HEK293 (cell line): ENCODE measurements at regions of chr3 and their contacts with region 1.

Region 1: DNA sequence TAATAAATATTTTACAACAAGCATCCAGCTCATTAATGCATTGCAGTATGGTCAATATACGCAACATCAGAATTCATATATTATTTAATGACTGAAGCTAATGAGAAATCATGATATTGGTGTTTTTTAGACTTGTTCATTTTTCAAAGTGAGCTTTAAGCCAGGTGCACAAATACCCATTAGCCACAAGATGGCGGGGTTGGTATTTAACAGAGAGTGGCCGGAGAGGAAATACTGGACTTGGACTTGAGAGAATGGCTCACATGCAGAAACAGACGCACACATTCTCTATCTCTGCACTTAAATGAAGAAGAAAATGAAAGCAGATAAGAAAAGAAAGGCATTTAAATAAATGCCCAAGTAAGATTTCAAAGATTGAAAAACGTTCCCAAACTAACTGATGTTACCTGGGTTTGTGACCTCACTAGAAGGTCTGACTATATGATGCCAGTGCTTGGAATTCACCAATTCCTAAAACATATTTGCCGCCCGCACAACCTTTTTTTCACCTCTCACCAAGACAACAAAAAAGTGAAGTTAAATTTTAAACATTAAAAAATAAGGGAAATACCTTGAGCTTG is 21.2 kb upstream of the CRBN start:
- H3K4me3 ChIP-seq: no peak overlapping the region
- H3K27ac ChIP-seq: no peak overlapping the region
- H3K4me1 ChIP-seq: no peaks in the 10 kb centered on the region
- CTCF ChIP-seq: no peak

Region 2: DNA sequence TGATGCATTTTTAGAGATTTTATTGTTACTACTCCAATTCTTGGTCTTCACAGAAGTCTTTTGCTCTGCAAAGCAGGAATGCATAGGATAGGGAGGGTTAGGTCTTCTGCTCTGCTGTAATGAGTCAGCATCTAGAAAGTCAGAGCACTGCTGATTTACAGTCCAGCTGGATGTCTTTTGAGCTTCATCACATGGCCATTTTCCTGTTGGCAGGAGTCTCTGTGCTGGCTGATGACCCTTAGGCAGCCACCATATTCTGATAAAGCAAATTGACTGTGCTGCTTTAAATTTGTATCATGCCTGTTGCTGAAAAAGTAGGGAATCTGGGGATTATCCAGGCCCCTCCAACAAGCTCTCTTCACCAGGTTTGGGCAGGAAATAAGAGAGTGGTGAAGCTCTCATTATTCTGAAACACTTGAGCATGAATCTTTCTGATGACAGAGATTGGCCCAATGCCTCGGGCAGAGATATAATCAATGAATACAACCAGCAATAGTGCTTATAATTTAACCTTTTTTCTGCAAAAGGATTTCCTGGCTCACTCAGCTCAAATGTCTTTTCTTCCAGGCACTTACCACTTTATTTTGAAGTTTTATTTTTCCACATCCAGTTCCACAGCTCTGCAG is 11.5 kb before region 1 on chr3:
- CTCF ChIA-PET with region 1: interaction called, 11 read pairs
- POLR2A ChIA-PET with region 1: no interaction called
- H3K4me3 ChIP-seq: no peak overlapping the region
- H3K27ac ChIP-seq: no peak overlapping the region
- H3K4me1 ChIP-seq: no peaks in the 10 kb centered on the region
- CTCF ChIP-seq: no peak

Region 3: DNA sequence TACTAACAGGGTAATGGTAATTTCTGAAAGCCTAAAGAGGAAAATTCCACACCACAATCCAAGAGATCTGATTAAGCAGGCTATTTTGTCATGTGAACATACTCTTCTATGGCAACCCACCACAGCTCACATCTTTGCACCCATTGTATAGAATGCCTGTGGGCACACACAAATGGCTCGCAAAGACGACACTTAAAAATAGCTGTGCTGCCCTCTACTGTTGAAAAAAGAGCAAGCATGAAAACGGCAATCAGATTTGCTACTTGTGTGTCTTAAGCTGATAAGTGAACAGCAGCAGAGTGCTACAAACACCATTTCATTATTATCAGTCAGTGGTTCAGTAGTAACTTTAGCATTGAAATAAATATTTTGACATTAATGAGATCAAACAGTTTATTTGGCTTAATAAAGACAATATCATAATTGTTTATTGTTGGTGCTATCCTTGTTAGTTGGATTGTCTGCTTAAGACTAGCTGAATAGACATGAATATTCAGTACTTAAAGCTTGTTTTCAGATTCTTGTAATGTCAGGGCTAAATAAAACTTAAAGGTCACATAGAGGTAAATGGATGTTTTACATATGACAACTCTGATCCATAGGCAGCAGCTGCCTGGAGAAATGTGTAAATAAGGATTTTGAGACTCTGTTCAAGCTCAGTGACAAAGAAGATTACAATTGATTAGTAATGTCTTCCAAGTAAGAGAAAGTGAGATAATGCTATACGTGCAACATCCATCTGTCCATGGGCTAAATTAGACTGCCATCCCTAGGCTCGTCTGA is 797.6 kb after region 1 on chr3:
- CTCF ChIA-PET with region 1: interaction called, 34 read pairs
- POLR2A ChIA-PET with region 1: no interaction called
- H3K4me3 ChIP-seq: no peak overlapping the region
- H3K27ac ChIP-seq: no peak overlapping the region
- H3K4me1 ChIP-seq: no peaks in the 10 kb centered on the region
- CTCF ChIP-seq: no peak

Region 4: DNA sequence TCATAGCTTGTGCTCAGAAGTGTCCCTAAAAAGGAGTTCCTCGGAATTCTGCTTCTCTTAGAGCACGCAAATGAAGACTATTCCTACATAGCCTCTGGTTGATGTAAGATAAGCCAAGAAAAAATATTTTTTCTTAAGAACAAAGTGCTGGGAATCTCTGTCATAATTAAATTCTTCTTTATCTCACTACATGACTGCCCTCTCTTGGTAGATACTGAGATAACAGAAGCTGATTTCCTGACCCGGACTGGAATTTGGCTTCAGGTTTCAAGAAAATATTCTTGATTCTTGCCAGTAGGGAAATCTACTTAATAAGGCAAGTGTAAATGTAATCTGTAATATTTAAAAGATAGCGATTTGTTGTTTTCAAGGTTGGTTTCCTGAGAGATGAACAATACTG is 1071.1 kb after region 1 on chr3:
- CTCF ChIA-PET with region 1: interaction called, 14 read pairs
- POLR2A ChIA-PET with region 1: no interaction called
- H3K4me3 ChIP-seq: no peak overlapping the region
- H3K27ac ChIP-seq: no peak overlapping the region
- H3K4me1 ChIP-seq: no peaks in the 10 kb centered on the region
- CTCF ChIP-seq: no peak

Region 5: DNA sequence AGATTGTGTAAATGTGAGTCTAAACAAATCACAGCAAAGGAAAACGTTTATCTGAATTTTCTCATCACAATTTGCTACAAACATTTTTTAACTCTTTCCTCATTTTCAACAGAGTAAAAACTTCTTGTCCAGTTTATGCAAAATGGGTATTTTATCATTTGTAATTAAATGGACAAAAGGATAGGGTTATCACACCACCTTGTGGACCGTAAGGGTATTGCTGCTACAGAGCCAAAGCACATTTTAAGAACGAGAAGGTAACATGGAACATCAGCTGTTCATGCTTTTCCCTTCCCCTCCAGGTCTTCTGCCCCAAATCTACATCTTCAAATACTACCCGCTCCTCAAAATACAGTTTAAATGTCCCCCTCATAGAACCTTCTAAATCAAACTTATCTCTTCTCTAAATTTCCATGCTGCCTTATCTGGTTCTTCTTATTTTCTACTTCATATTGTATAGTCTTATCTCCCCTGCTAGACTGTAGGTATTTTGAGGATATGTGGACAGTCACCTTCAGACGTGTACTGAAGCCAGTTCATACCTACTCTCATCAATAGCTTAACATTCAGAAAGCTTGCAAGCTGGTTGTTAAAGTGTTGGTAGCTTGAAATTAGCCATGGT is 1089.7 kb after region 1 on chr3:
- CTCF ChIA-PET with region 1: interaction called, 23 read pairs
- POLR2A ChIA-PET with region 1: no interaction called
- H3K4me3 ChIP-seq: no peak overlapping the region
- H3K27ac ChIP-seq: no peak overlapping the region
- H3K4me1 ChIP-seq: no peaks in the 10 kb centered on the region
- CTCF ChIP-seq: peak; percentile 59; the same call in 1 of the 2 replicates